ENCODE measurements at regions of chr14 and their contacts with region 1.

Region 1: GRCh38 chr14:79638672-79639266 is 572.5 kb downstream of the DIO2 start:
- DNase-seq: no peak
- ATAC-seq: no peak
- H3K4me3 ChIP-seq: no peak overlapping the region
- H3K27ac ChIP-seq: no peak overlapping the region
- H3K4me1 ChIP-seq: no peaks in the 10 kb centered on the region
- H3K27me3 ChIP-seq: no peaks in the 10 kb centered on the region
- CTCF ChIP-seq: no peak
- POLR2A ChIP-seq: no peak

Region 2: DNA sequence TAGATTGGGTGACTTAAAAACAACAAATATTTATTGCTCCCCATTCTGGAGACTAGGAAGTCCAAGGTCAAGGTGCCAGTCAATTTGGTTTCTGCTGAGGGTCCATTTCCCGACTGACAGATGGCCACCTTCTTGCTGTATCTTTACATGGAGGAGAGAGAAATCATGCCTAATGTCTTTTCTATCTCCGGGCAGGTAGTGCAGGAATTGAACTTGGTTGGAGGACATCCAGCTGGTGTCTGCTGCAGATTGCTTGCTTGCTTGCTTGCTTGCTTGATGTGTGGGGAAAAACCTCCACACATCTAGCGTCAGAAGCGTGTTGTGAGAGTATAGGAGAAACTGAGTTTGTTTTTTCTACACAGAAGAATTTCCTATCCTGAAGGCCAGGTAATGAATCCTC is 11.1 kb after region 1 on chr14:
- intact Hi-C with region 1: loop called in 1 of 10 experiments (anchors 1 kb)
- DNase-seq: no peak
- ATAC-seq: no peak
- H3K4me3 ChIP-seq: no peak overlapping the region
- H3K27ac ChIP-seq: no peak overlapping the region
- H3K4me1 ChIP-seq: no peaks in the 10 kb centered on the region
- H3K27me3 ChIP-seq: no peaks in the 10 kb centered on the region
- CTCF ChIP-seq: no peak
- POLR2A ChIP-seq: no peak

Measured in heart left ventricle (tissue), 16 donors.